Calu3 (cell line): ENCODE measurements at regions of chr1 and their contacts with region 1.

Region 1: DNA sequence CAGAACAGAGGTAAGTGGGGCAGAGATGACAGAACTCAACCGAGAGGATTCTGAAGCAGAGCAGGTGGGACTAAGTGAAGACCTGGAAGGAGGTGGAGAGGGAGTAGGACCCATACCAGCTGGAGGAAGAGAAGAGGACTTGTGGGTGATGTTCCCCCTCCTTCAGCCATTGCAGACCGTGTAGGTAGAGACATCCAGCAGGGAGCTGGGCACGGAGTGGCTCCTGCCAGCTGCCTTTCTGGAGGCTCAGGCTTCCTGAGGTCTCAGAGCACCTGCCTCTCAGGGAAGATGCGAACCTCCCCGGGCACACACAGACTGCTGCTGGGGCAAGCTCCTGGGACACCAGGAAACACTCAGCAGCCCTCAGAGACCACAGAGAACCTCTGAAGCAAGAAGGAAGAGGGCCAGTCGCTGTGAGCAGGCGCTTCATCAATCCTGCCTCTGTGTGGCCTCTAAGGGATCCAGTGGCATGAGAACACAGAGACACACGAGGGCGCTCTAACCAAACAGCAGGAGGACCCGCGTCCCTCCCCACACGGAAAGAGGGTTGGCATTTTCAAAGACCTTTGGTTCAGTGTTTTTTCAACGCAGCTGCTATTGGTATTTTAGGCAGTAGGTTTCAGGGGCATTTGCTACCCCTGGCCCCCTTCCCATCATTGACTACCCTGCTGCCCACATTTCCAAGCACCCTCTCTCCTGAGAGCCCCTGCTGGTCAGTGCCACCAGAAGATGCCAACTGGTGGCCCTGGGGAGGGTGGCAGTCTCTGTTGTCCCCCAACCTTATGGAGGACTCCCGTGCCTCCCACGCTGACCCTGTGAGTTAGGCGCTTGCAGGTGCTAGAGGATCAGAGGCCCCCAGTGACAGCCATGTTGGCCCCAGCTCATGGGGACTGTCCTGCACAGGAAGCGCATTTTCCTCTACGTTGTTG is 89.6 kb upstream of the EDN2 start:
- DNase-seq: peak; percentile 78
- H3K4me3 Mint-ChIP-seq: no peak overlapping the region
- H3K27ac Mint-ChIP-seq: no peak overlapping the region
- H3K4me1 Mint-ChIP-seq: no peaks in the 10 kb centered on the region
- H3K27me3 Mint-ChIP-seq: no peaks in the 10 kb centered on the region
- CTCF ChIP-seq: peak; percentile 79

Region 2: DNA sequence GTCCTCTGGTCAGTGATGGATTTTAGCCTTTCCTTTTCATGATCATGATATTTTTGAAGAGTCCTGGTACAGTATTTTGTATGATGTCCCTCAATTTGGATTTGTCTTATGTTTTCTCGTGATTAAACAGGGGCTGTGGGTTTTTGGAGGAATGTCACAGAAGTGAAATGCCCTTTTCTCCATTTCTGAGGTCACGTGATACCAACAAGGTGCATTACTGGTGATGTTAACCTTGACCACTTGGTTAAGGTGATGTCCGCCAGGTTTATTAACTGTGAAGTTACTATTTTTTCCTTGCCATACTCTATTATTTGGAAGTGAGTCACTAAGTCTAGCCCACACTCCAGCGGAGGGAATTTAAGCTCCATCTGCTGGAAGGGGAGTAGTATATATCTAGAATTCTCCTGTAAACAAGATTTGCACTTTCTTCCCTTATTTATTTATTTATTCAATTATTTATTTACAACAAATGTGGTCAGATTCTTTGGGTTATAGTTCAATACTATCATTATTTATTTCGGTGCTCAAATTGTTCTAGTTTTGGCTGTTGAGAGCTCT is 221.2 kb after region 1 on chr1:
- CTCF ChIA-PET with region 1: interaction called, 3 read pairs
- intact Hi-C with region 1: loop called (anchors 2 kb)
- DNase-seq: peak; percentile 16
- H3K4me3 Mint-ChIP-seq: no peak overlapping the region
- H3K27ac Mint-ChIP-seq: no peak overlapping the region
- H3K4me1 Mint-ChIP-seq: no peaks in the 10 kb centered on the region
- H3K27me3 Mint-ChIP-seq: no peaks in the 10 kb centered on the region
- CTCF ChIP-seq: peak; percentile 42

Region 3: DNA sequence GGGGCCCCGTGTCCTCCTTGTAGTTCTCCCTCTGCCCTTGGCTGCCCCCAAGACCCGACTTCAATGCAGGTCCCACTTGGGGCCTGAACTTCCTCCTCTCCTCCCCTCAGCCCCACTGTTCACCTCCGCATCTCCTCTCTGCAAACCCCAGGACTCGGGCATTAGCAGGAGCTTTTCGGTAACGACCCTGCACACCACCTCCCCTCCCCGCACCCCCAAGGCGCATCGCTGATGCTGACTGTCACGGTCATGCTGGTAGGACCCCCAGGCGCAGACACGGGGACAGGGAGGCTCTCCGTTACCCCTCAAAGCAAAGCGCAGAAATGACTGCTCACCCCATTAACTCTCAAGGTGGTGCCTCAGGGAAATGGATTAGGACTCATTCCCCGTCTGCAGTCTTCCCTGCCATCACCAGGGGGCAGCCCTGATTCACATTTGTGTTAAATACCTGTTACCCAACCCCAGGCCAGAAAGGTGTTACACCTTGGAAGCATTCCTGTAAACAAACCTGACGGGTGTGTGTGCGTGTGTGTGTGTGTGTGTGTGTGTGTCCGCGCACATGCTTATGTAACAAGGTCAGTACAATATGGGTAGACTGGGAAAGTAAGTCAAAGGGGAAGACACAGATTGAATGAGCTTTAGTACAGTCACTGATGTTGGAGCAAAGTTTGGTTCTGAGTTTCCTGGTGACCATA is 572.7 kb after region 1 on chr1:
- CTCF ChIA-PET with region 1: no interaction called
- intact Hi-C with region 1: loop called (anchors 5 kb)
- DNase-seq: peak; percentile 91
- H3K4me3 Mint-ChIP-seq: no peak overlapping the region
- H3K27ac Mint-ChIP-seq: no peak overlapping the region
- H3K4me1 Mint-ChIP-seq: peaks cover 7% of the 10 kb centered on the region
- H3K27me3 Mint-ChIP-seq: peaks cover 49% of the 10 kb centered on the region
- CTCF ChIP-seq: peak; percentile 88